GM23248 (cell line): ENCODE measurements at regions of chr4 and their contacts with region 1.

Region 1: GRCh38 chr4:87235020-87235671 is 14.7 kb upstream of the KLHL8 start:
- DNase-seq: peak; percentile 70
- H3K4me3 ChIP-seq: peak overlapping the region; percentile 76
- H3K27ac ChIP-seq: peak overlapping the region; percentile 51
- H3K4me1 ChIP-seq: peaks cover 21% of the 10 kb centered on the region
- H3K27me3 ChIP-seq: no peaks in the 10 kb centered on the region

Region 2: GRCh38 chr4:86741846-86742245 is 493.3 kb before region 1 on chr4:
- in situ Hi-C with region 1: no loop called
- DNase-seq: no peak
- H3K4me3 ChIP-seq: no peak overlapping the region
- H3K27ac ChIP-seq: no peak overlapping the region
- H3K4me1 ChIP-seq: no peaks in the 10 kb centered on the region
- H3K27me3 ChIP-seq: no peaks in the 10 kb centered on the region

Region 3: DNA sequence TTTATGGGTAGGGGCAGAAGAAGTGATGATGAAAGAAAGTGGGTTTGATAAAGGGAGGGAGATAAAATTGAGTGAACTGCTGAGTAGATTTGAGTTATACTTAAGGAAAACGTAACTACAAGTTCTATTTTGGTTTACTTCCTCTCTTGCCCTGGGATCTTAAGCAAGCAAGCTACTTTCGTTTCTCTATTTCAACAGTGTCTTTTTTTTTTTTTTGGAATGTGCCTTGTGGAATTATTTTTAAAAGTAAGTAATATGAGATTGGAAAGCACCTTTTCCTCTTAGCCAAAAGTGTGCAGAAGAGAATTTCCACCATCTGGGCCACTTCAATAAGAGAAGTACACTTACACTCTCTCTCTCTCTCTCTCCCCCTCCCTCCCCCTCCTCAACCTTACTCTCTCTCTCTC is 326.9 kb before region 1 on chr4:
- in situ Hi-C with region 1: loop called (anchors 25 kb)
- DNase-seq: peak; percentile 55
- H3K4me3 ChIP-seq: peak overlapping the region; percentile 36; the same call in 1 of the 2 replicates
- H3K27ac ChIP-seq: no peak overlapping the region
- H3K4me1 ChIP-seq: peaks cover 5% of the 10 kb centered on the region; the same call in 1 of the 2 replicates
- H3K27me3 ChIP-seq: no peaks in the 10 kb centered on the region

Region 4: GRCh38 chr4:87150498-87151261 is 84.5 kb before region 1 on chr4:
- in situ Hi-C with region 1: loop called (anchors 5 kb)
- DNase-seq: peak; percentile 71
- H3K4me3 ChIP-seq: no peak overlapping the region
- H3K27ac ChIP-seq: no peak overlapping the region
- H3K4me1 ChIP-seq: no peaks in the 10 kb centered on the region
- H3K27me3 ChIP-seq: no peaks in the 10 kb centered on the region